A673 (cell line): ENCODE measurements at regions of chr7 and their contacts with region 1.

Region 1: GRCh38 chr7:32803406-32804141 is 88.0 kb downstream of the KBTBD2 start:
- DNase-seq: no peak
- H3K4me3 ChIP-seq: no peak overlapping the region
- H3K27ac ChIP-seq: no peak overlapping the region
- H3K4me1 ChIP-seq: no peaks in the 10 kb centered on the region
- H3K27me3 ChIP-seq: no peaks in the 10 kb centered on the region
- CTCF ChIP-seq: no peak

Region 2: DNA sequence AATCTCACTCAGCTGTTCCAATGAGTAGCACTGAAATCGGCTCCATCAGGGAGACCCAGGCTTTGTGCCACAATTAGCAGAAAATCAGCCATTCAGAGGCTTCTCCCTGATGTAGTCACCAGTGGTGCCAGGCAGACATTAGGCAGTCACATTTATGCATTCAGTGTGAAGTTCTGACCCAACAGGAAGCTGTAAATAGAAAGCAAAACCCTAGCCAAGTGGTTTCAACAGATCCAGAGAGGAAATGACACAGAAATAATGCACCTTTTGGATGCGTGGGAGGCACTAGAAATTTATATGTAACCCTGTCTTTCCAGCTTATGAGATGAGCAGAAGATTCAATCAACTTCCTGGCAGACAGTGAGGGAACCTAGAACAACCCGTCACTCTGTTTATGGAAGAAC is 919.8 kb before region 1 on chr7:
- CTCF ChIA-PET with region 1: no interaction called
- POLR2A ChIA-PET with region 1: no interaction called
- intact Hi-C with region 1: no loop called
- DNase-seq: peak; percentile 80
- H3K4me3 ChIP-seq: no peak overlapping the region
- H3K27ac ChIP-seq: peak overlapping the region; percentile 28
- H3K4me1 ChIP-seq: peaks cover 10% of the 10 kb centered on the region
- H3K27me3 ChIP-seq: no peaks in the 10 kb centered on the region
- CTCF ChIP-seq: no peak

Region 3: DNA sequence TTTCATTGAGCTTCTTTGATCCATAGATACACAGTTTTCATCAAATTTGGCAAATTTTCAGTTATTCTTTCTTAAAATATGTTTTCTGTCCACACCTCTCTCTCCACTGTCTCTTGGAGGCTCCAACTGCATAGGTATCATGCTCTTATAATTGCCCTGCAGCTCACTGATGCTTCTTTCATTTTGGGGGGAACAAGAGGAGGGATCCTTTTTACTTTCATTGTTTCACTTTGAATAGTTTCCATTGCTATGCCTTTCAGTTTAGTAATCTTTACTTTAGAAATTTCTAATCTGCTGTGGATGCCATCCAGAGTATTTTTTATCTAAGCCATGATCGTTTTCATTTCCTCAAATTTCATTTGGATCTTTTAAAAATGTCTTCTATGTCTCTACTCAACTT is 55.1 kb after region 1 on chr7:
- CTCF ChIA-PET with region 1: no interaction called
- POLR2A ChIA-PET with region 1: no interaction called
- intact Hi-C with region 1: loop called (anchors 2 kb)
- DNase-seq: no peak
- H3K4me3 ChIP-seq: no peak overlapping the region
- H3K27ac ChIP-seq: no peak overlapping the region
- H3K4me1 ChIP-seq: no peaks in the 10 kb centered on the region
- H3K27me3 ChIP-seq: no peaks in the 10 kb centered on the region
- CTCF ChIP-seq: no peak

Region 4: DNA sequence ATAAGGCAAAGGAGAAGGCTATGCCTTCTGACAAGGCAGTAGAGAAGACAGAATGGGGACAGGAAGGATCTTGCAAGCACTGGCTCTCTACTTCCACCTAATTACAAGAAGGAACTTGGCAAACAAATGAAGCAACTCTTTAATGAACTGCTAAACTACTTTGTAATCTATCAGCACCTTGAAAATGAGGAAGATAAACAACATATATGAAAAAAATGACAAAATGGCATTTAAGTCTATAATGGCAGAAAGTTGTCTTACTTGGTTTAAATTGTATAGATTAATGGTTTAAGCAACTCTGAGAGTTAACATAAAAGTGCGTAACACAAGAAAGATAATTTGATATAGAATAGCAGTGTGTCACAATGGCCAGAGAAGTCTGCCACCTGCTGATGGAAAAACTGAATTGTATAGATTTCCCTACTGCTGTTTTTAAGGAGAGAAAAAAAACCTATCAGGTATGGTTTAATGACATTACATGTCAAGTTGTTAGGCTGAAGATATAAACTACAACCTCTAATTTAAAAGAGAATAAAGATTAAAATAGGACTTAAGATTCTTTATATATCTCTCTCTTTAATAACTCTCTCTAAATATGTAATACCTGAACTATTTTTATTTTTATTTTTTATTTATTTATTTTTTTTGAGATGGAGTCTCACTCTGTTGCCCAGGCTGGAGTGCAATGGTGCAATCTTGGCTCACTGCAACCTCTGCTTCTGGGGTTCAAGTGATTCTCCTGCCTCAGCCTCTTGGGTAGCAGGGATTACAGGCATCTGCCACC is 247.2 kb after region 1 on chr7:
- CTCF ChIA-PET with region 1: no interaction called
- POLR2A ChIA-PET with region 1: no interaction called
- intact Hi-C with region 1: loop called (anchors 10 kb)
- DNase-seq: peak; percentile 76
- H3K4me3 ChIP-seq: no peak overlapping the region
- H3K27ac ChIP-seq: peak overlapping the region; percentile 3
- H3K4me1 ChIP-seq: peaks cover 20% of the 10 kb centered on the region
- H3K27me3 ChIP-seq: no peaks in the 10 kb centered on the region
- CTCF ChIP-seq: peak; percentile 78

Region 5: DNA sequence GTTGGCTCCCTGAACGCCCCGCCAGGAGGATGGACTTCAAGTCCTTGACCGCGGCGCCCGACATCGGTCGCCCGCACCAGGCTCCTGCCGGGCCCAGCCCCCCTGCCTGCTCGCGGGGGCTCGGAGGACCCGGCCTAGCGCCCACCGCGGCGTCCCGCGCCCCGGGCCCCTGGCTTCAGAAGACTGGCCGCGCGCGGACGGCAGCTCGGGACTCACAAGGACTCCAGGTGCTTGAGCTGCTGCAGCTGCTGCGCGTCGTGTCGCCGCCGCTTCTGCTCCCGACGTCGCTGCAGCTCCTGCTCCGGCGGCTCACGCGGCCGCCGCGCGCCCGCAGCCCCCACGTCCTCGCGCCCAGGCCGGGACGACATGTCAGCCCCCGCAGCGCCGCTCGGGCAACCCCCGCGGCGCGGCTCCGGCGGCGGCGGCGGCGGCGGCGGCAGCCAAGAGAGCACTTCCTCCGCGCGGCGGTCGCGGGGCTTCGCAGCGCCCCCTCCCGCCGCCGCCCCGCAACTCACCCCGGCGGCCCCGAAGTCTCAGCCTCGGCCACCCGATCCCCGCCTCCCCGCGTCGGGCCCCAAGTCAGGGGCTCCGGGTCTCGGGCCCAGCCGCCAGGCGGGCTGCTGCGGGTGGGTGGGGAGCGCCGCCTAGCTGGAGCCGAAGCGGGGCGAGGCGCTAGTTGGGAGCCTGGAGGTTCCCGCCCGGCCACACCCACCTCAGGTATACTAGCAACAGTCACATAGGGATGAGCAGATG is 305.6 kb after region 1 on chr7 and contains the start of gene RP9:
- CTCF ChIA-PET with region 1: interaction called, 3 read pairs
- POLR2A ChIA-PET with region 1: no interaction called
- intact Hi-C with region 1: loop called (anchors 1 kb)
- DNase-seq: peak; percentile 89
- H3K4me3 ChIP-seq: peak within 1 kb of the TSS; percentile 95
- H3K27ac ChIP-seq: peak within 1 kb of the TSS; percentile 86
- H3K4me1 ChIP-seq: peaks cover 8% of the 10 kb centered on the region
- H3K27me3 ChIP-seq: no peaks in the 10 kb centered on the region
- CTCF ChIP-seq: peak; percentile 60
- total RNA-seq, gene RP9: 29.3 and 29.5 TPM in 2 replicates